A673 (cell line): ENCODE measurements at regions of chr22 and their contacts with region 1.

Region 1: DNA sequence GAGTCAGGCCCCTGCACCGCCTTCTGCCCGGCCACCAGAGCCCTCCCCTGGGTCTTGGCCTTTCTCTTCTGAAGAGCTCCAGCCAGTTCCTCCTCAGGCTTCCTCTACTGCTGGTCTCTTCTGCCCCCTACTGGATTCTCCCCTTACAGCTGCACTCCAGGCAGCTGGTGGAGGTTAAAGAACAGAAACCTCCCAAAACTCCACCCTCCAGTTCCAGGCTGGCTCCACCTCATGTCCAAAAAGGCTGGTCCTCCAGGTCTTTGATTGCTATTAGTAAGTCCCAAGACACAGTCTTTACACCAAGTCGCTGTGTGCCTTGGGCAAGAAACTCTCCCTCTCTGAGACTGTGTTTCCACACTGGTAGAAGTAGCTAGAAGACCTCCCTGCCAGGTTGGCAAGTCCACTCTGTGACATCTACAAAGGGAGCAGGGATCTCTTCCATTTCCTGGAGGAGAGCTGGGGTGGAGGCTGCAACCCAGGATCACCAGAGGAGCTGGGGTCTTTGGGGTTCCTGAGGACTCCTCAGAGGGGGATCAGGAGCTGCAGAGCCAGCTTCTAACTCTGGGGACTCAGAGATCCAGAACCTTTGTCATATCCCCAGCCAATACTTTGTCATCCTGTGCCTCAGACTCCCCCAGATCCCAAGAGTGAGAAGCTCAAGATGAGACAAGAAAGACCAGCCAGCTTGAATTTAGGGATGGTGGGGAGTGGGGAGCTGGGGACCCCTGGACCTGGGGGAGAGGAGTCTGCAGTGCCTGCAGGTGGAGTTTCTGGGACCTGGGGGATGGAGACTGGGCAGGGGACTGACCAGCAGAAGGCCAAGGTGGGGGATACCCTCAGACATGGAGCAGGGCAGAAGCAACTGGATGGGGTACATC is 3.4 kb upstream of the IGLL5 start:
- DNase-seq: peak; percentile 65
- H3K4me3 ChIP-seq: no peak overlapping the region
- H3K27ac ChIP-seq: no peak overlapping the region
- H3K4me1 ChIP-seq: no peaks in the 10 kb centered on the region
- H3K27me3 ChIP-seq: peaks cover 3% of the 10 kb centered on the region
- CTCF ChIP-seq: peak; percentile 74

Region 2: DNA sequence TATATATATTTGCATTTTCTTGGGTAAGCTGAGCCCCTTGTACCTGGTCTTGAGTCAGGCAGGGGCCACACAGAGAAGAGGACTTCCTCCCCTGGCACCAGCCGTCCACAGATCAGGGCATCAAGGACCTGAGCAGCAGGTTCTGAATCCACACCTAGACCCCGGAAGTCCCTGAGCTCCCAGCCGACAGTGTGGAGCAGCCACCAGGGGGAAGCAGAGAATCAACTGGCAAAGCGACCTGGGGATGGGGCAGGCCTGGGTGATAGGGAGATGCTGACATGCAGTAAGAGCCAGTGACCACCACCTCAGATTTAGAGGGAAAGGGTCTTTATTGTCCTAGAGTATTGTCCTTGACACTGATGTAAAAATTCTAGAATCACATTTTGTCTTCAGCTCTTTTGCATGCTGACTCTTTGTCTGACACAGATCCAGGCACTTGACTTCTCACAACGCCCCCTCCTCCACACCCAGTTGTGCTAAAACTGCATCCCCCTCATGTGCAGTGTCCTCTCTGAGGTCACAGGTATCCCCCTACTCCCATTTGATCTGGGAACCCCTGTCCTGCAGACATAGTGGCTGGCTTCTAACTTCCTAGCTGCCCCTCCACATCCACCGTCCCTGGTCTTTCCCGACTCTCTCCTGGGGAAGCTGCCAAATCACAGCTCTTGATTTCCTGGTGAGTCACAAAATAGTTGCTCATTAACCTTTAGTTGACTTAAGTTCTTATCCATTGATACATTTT is 130.6 kb before region 1 on chr22:
- CTCF ChIA-PET with region 1: interaction called, 10 read pairs
- POLR2A ChIA-PET with region 1: no interaction called
- intact Hi-C with region 1: no loop called
- DNase-seq: peak; percentile 62
- H3K4me3 ChIP-seq: no peak overlapping the region
- H3K27ac ChIP-seq: no peak overlapping the region
- H3K4me1 ChIP-seq: no peaks in the 10 kb centered on the region
- H3K27me3 ChIP-seq: no peaks in the 10 kb centered on the region
- CTCF ChIP-seq: peak; percentile 83